Endothelial cell of umbilical vein (primary cell): ENCODE measurements at regions of chr2 and their contacts with region 1.

Region 1: GRCh38 chr2:15730545-15731212 is 139.0 kb downstream of the DDX1 start:
- DNase-seq: peak; percentile 97
- H3K4me3 ChIP-seq: no peak overlapping the region
- H3K27ac ChIP-seq: peak overlapping the region; percentile 24
- H3K4me1 ChIP-seq: peaks cover 31% of the 10 kb centered on the region
- H3K27me3 ChIP-seq: peaks cover 0 to 1% of the 10 kb centered on the region in 2 experiments
- CTCF ChIP-seq: no peak
- POLR2A ChIP-seq: peak; percentile 24

Region 2: DNA sequence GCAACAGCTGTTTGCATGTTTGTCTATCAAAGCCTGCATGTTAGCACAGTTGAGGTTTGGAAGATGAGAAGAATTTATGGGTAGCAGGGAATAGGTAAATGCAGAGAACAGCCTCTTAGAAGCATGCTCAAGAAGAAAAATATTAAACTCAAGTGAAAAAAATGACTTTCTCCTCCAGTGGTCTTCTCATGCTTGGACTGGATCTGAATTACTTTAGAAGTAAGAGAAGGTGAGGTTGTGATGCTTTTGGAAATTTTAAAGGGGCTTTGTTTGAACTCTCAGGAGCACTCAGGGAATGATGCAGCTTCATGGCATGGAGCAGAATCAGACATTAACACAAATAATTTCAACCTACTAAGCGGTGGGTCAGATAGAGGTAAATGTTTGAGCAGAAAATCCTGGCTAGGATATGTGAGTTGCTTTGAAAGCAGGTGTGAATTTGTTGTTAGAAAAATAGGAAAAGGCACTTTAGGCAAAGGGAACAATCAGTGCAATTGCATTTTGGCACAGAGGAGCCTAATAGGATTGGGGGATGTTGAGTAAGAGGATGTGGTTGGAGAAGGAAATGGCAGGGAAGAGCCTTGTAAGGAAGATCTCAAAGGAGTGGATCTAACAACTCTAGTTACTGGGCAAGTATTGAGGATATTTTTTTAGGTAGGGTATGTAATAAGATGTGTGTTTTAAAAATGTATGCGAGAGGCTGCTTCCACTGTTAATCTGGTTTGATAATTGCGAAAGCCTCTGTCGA is 62.7 kb before region 1 on chr2:
- CTCF ChIA-PET with region 1: no interaction called
- POLR2A ChIA-PET with region 1: no interaction called
- dilution Hi-C with region 1: no loop called
- intact Hi-C with region 1: loop called (anchors 1 kb)
- DNase-seq: peak; percentile 39
- H3K4me3 ChIP-seq: no peak overlapping the region
- H3K27ac ChIP-seq: peak overlapping the region; percentile 72
- H3K4me1 ChIP-seq: peaks cover 24% of the 10 kb centered on the region
- H3K27me3 ChIP-seq: no peaks in the 10 kb centered on the region
- CTCF ChIP-seq: no peak
- POLR2A ChIP-seq: no peak

Region 3: GRCh38 chr2:15912205-15912604 is 181.5 kb after region 1 on chr2:
- CTCF ChIA-PET with region 1: no interaction called
- POLR2A ChIA-PET with region 1: no interaction called
- dilution Hi-C with region 1: no loop called
- intact Hi-C with region 1: loop called (anchors 1 kb)
- DNase-seq: peak; percentile 88
- H3K4me3 ChIP-seq: no peak overlapping the region
- H3K27ac ChIP-seq: no peak overlapping the region
- H3K4me1 ChIP-seq: no peaks in the 10 kb centered on the region
- H3K27me3 ChIP-seq: no peaks in the 10 kb centered on the region
- CTCF ChIP-seq: no peak
- POLR2A ChIP-seq: no peak

Region 4: GRCh38 chr2:16361261-16361995 is 630.7 kb after region 1 on chr2:
- CTCF ChIA-PET with region 1: no interaction called
- POLR2A ChIA-PET with region 1: no interaction called
- dilution Hi-C with region 1: no loop called
- intact Hi-C with region 1: no loop called
- DNase-seq: no peak
- H3K4me3 ChIP-seq: no peak overlapping the region
- H3K27ac ChIP-seq: no peak overlapping the region
- H3K4me1 ChIP-seq: no peaks in the 10 kb centered on the region
- H3K27me3 ChIP-seq: no peaks in the 10 kb centered on the region
- CTCF ChIP-seq: no peak
- POLR2A ChIP-seq: no peak